OCI-LY7 (cell line): ENCODE measurements at regions of chr18 and their contacts with region 1.

Region 1: GRCh38 chr18:26700201-26700600 is 151.8 kb upstream of the KCTD1 start:
- DNase-seq: no peak
- H3K4me3 ChIP-seq: no peak overlapping the region
- H3K27ac ChIP-seq: no peak overlapping the region
- H3K4me1 ChIP-seq: no peaks in the 10 kb centered on the region
- CTCF ChIP-seq: no peak

Region 2: DNA sequence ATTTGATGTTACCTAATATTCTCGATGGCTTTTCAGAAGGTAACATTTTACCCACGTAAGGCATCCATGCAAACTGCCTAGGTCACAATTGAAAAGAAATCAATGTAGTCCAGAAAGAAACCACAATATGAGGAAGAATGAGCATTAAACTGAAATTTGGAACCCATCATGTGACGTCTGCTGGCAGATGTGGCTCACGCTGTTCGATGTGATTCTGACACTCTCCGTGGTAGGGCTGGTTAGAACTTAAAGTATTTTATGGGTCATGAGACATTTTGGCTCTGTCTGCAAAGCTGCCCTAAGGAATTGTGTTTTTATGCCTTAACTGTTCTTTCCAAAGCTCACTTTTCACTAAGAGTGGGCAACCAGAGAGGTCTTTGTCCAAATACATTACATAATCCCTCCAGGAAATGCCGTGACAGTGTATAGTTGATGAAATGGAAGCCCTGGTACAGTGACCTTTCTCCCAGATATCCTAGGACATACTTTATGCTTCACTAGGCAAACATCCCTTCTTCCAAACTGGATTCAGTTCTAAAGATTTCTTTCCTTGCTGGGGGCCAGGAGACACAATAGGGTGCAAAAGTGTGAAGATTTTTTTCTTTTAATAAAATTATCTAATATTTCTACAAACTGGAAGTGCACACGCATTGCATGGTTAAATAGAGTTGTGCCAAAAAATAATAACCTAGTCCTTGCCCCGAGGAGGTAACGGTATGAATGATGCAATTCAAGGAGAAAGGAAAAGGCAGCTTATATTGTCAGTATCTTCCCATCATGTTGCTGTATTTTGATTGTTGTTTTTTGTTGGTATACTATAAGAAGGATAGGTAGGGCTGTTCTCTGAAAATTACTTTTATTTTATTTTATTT is 46.3 kb after region 1 on chr18:
- CTCF ChIA-PET with region 1: no interaction called
- POLR2A ChIA-PET with region 1: no interaction called
- intact Hi-C with region 1: loop called (anchors 2 kb)
- DNase-seq: no peak
- H3K4me3 ChIP-seq: no peak overlapping the region
- H3K27ac ChIP-seq: no peak overlapping the region
- H3K4me1 ChIP-seq: no peaks in the 10 kb centered on the region
- CTCF ChIP-seq: no peak

Region 3: DNA sequence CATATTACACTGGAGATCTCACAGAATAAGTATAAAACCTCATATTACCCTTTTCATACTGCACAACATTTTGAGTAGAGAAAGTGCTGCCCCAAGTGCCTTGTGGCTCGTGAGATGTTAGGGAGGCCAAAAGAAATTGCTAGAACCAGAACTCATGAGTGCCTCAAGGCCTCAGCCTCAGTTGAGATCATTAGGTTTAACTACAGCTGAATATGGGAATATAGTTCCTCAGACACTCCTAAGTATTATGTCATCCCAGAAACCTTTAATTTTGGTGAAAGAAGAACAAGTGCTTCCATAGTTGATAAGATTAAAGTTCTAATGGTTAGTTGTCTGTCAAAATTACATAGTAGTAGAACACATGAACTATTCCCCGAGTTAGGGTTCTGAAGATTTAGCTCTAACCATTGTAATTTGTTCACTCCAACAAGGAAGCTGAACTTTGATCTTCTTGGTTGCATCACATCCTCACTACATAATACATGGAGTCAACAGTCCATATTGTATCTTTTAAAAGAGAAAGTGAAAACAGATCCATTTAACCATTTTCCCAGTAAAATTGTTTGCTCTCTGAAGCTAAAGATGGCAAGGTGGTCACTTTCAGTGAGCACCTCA is 174.9 kb after region 1 on chr18:
- CTCF ChIA-PET with region 1: no interaction called
- POLR2A ChIA-PET with region 1: no interaction called
- intact Hi-C with region 1: no loop called
- DNase-seq: no peak
- H3K4me3 ChIP-seq: no peak overlapping the region
- H3K27ac ChIP-seq: no peak overlapping the region
- H3K4me1 ChIP-seq: no peaks in the 10 kb centered on the region
- CTCF ChIP-seq: no peak